ENCODE measurements at regions of chr7 and their contacts with region 1.

Region 1: DNA sequence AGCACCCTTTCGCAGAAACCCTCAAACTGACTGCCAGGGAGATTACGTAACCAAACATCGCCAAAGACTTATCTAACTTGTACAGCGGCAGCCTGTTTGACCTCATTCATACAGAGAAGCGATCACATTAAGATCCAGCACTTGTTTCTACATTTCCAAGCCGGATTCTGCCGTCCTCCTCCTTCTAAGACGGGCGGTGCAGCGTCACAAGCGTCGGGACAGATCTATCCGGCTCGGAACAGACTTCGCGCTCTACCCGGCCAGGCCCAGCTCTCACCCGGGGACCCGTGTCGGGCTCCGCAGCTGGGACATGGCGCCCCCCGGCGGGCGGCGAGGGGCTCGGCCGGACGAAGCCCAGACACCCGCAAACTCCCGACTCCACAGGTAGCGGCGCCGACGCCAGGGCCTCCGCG is 373 bp downstream of the H2AZ2 start:
- DNase-seq: peak; percentile 72
- ATAC-seq: peak; percentile 86
- H3K4me3 ChIP-seq: peak overlapping the region; percentile 75 to 96
- H3K27ac ChIP-seq: peak overlapping the region; percentile 96
- H3K4me1 ChIP-seq: peaks cover 23% of the 10 kb centered on the region
- H3K27me3 ChIP-seq: no peaks in the 10 kb centered on the region
- CTCF ChIP-seq: peak; percentile 99

Region 2: GRCh38 chr7:44654255-44654796 is 193.2 kb before region 1 on chr7:
- CTCF ChIA-PET with region 1: no interaction called
- POLR2A ChIA-PET with region 1: no interaction called
- in situ Hi-C with region 1: no loop called
- intact Hi-C with region 1: no loop called
- DNase-seq: no peak
- ATAC-seq: no peak
- H3K4me3 ChIP-seq: no peak overlapping the region
- H3K27ac ChIP-seq: no peak overlapping the region
- H3K4me1 ChIP-seq: no peaks in the 10 kb centered on the region
- H3K27me3 ChIP-seq: no peaks in the 10 kb centered on the region
- CTCF ChIP-seq: no peak

Region 3: GRCh38 chr7:44912775-44913347 is 65.3 kb after region 1 on chr7:
- CTCF ChIA-PET with region 1: no interaction called
- POLR2A ChIA-PET with region 1: interaction called, 15 read pairs
- in situ Hi-C with region 1: no loop called
- intact Hi-C with region 1: no loop called
- DNase-seq: no peak
- ATAC-seq: peak; percentile 78
- H3K4me3 ChIP-seq: no peak overlapping the region
- H3K27ac ChIP-seq: peak overlapping the region; percentile 40; the same call in 1 of the 2 replicates
- H3K4me1 ChIP-seq: peaks cover 11% of the 10 kb centered on the region
- H3K27me3 ChIP-seq: no peaks in the 10 kb centered on the region
- CTCF ChIP-seq: no peak

Measured in Panc1 (cell line).